ENCODE measurements at regions of chr19 and their contacts with region 1.

Region 1: GRCh38 chr19:52695996-52696395 is 38.8 kb downstream of the ZNF611 start:
- DNase-seq: no peak
- H3K4me3 ChIP-seq: no peak overlapping the region
- H3K27ac ChIP-seq: no peak overlapping the region
- H3K4me1 ChIP-seq: peaks cover 0 to 6% (median 2%) of the 10 kb centered on the region in 4 donors
- H3K27me3 ChIP-seq: no peaks in the 10 kb centered on the region
- CTCF ChIP-seq: no peak

Region 2: GRCh38 chr19:52369559-52370340 is 326.2 kb before region 1 on chr19 and contains the start of gene ZNF880:
- intact Hi-C with region 1: loop called (anchors 5 kb)
- DNase-seq: peak; percentile 93 to 95
- H3K4me3 ChIP-seq: peak within 1 kb of the TSS; percentile 83 to 85
- H3K27ac ChIP-seq: peak within 1 kb of the TSS; percentile 89 to 97
- H3K4me1 ChIP-seq: peaks cover 0 to 11% (median 8%) of the 10 kb centered on the region in 4 donors
- H3K27me3 ChIP-seq: no peaks in the 10 kb centered on the region
- CTCF ChIP-seq: no peak

Region 3: DNA sequence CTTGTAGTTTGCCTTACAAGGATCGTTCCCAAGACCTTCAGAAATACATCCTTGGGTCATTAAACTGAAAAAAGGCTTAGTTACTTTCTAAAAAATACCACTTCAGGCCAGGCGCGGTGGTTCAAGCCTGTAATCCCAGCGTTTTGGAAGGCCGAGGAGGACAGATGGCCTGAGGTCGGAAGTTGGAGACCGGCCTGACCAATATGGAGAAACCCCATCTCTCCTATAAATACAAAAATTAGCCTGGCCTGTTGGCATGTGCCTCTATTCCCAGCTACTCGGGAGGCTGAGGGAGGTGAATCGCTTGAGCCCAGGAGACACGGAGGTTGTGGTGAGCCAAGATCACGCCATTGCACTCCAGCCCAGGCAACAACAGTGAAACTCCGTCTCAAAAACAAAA is 127.7 kb after region 1 on chr19:
- intact Hi-C with region 1: no loop called
- DNase-seq: no peak
- H3K4me3 ChIP-seq: no peak overlapping the region
- H3K27ac ChIP-seq: no peak overlapping the region
- H3K4me1 ChIP-seq: peaks cover 0 to 8% (median 5%) of the 10 kb centered on the region in 4 donors
- H3K27me3 ChIP-seq: no peaks in the 10 kb centered on the region
- CTCF ChIP-seq: no peak

Measured in tibial artery (tissue), 4 donors.